ENCODE measurements at regions of chr9 and their contacts with region 1.

Region 1: GRCh38 chr9:127980706-127981558 is at the start of gene EEIG1:
- DNase-seq: peak; percentile 80
- ATAC-seq: peak; percentile 87
- H3K4me3 ChIP-seq: peak within 1 kb of the TSS; percentile 86 to 90 (median 90)
- H3K27ac ChIP-seq: peak within 1 kb of the TSS; percentile 84
- H3K4me1 ChIP-seq: peaks cover 58% of the 10 kb centered on the region
- H3K27me3 ChIP-seq: no peaks in the 10 kb centered on the region; a peak in 1 of 5 replicates
- CTCF ChIP-seq: no peak
- EP300 ChIP-seq: no peak
- POLR2A ChIP-seq: peak in 1 of 2 experiments; percentile 66; a peak in 2 of 4 replicates
- RAD21 ChIP-seq: no peak
- total RNA-seq, gene EEIG1: 16.1 and 16.6 TPM in 2 replicates

Region 2: DNA sequence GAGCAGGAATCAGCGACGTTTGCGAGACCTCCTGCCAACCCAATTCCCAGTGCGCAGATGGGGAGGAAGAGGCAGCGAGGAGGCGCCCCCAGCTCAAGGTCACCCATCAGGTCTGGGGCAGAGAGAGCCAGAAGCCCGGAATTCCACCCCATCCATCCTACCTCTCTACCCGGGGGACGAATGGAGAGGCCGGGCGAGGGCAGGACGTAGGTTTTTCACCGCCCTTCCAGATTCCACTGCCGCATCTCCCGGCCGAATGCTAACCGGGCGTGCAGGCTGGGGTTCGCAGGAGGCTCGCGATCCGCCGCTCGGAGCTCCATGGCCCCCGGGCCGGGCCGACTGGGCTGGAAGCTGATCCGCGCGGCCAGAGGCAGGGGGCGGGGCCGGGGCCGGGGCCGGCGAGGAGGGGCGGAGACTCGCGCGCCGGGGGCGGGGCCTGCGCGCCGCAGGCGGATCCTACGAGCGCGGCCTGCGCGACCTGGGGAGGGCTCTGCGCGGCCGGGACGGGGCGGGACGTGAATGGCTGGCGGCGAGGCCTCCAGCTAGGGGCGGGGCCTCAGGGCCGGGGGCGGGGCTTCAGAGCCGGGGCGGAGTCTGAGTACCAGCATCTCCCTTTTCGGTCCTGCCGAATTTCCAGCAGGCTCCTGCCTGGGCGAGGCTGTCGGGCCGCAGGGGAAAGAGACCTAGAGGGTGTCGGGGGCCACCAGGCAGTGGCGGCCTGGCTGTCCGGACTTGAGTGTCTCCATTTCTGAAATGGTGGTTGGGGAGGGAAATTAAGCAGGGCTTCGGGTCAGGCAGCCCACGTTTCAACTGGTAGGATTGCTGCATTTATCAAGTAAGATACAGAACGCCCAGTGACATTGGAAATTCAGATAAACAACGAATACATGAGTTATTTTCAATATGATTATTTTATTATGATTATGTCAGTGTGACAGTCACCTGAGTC is 64.0 kb before region 1 on chr9 and contains the start of gene ST6GALNAC4:
- CTCF ChIA-PET with region 1: no interaction called
- POLR2A ChIA-PET with region 1: no interaction called
- in situ Hi-C with region 1: no loop called
- intact Hi-C with region 1: no loop called
- DNase-seq: peak; percentile 70
- ATAC-seq: peak; percentile 70
- H3K4me3 ChIP-seq: peak within 1 kb of the TSS; percentile 71 to 91 (median 73)
- H3K27ac ChIP-seq: peak within 1 kb of the TSS; percentile 40
- H3K4me1 ChIP-seq: peaks cover 78% of the 10 kb centered on the region
- H3K27me3 ChIP-seq: no peaks in the 10 kb centered on the region
- CTCF ChIP-seq: no peak
- EP300 ChIP-seq: no peak
- POLR2A ChIP-seq: no peak
- RAD21 ChIP-seq: no peak
- total RNA-seq, gene ST6GALNAC4: 14.8 and 18.8 TPM in 2 replicates

Region 3: GRCh38 chr9:127943731-127944144 is 37.2 kb before region 1 on chr9:
- CTCF ChIA-PET with region 1: no interaction called
- POLR2A ChIA-PET with region 1: interaction called, 3 read pairs
- in situ Hi-C with region 1: no loop called
- intact Hi-C with region 1: loop called (anchors 5 kb)
- DNase-seq: peak; percentile 61
- ATAC-seq: peak; percentile 78
- H3K4me3 ChIP-seq: no peak overlapping the region
- H3K27ac ChIP-seq: no peak overlapping the region
- H3K4me1 ChIP-seq: peaks cover 49% of the 10 kb centered on the region
- H3K27me3 ChIP-seq: no peaks in the 10 kb centered on the region
- CTCF ChIP-seq: peak; percentile 92
- EP300 ChIP-seq: no peak
- POLR2A ChIP-seq: no peak
- RAD21 ChIP-seq: peak; percentile 91

Region 4: GRCh38 chr9:127955294-127956035 is 25.5 kb before region 1 on chr9:
- CTCF ChIA-PET with region 1: no interaction called
- POLR2A ChIA-PET with region 1: interaction called, 11 read pairs
- in situ Hi-C with region 1: no loop called
- intact Hi-C with region 1: no loop called
- DNase-seq: peak; percentile 93
- ATAC-seq: peak; percentile 79
- H3K4me3 ChIP-seq: 0 out of 6 replicates have a peak overlapping the region, but pooled peaks of 1 of the 3 experiments have one; percentile 8
- H3K27ac ChIP-seq: peak overlapping the region; percentile 96
- H3K4me1 ChIP-seq: peaks cover 62% of the 10 kb centered on the region
- H3K27me3 ChIP-seq: no peaks in the 10 kb centered on the region
- CTCF ChIP-seq: peak; percentile 83
- EP300 ChIP-seq: peak in 1 of 2 experiments; percentile 63; a peak in 2 of 4 replicates
- POLR2A ChIP-seq: no peak
- RAD21 ChIP-seq: peak; percentile 81

Region 5: DNA sequence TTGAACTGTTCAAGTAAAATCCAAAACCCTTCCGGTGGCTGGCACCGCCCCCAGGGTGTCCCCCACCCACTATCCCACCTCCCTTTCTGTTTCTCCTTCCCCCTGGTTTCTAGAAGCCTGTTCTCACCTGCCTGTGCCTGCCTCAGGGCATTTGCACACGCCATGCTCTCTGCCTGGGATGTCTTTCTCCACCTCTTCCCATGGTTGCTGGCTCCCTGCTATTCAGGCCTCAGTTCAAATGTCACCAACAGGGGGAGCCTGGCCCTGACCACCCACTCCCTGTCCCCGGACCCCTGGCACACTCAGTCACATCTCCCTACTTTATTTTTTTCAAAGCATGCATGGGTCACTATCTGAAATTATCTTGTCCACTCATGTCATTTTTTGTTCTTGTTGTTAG is 39.8 kb after region 1 on chr9:
- CTCF ChIA-PET with region 1: no interaction called
- POLR2A ChIA-PET with region 1: no interaction called
- in situ Hi-C with region 1: no loop called
- intact Hi-C with region 1: loop called (anchors 5 kb)
- DNase-seq: peak; percentile 19
- ATAC-seq: peak; percentile 57
- H3K4me3 ChIP-seq: no peak overlapping the region
- H3K27ac ChIP-seq: no peak overlapping the region
- H3K4me1 ChIP-seq: peaks cover 53% of the 10 kb centered on the region
- H3K27me3 ChIP-seq: peaks cover under 1 to 9% of the 10 kb centered on the region in 2 experiments; a peak in 2 of 5 replicates
- CTCF ChIP-seq: peak; percentile 69
- EP300 ChIP-seq: no peak
- POLR2A ChIP-seq: no peak
- RAD21 ChIP-seq: peak; percentile 18; the same call in 1 of the 2 replicates

Measured in HepG2 (cell line).